ENCODE measurements at regions of chr2 and their contacts with region 1.

Region 1: GRCh38 chr2:66929632-66930338 is 467.3 kb upstream of the ETAA1 start:
- DNase-seq: peak; percentile 79
- H3K4me3 Mint-ChIP-seq: peak overlapping the region; percentile 55
- H3K27ac Mint-ChIP-seq: peak overlapping the region; percentile 68
- H3K4me1 Mint-ChIP-seq: peaks cover 22% of the 10 kb centered on the region
- H3K27me3 Mint-ChIP-seq: no peaks in the 10 kb centered on the region
- CTCF ChIP-seq: no peak

Region 2: GRCh38 chr2:66862886-66863650 is 66.7 kb before region 1 on chr2:
- CTCF ChIA-PET with region 1: no interaction called
- POLR2A ChIA-PET with region 1: interaction called, 15 read pairs
- intact Hi-C with region 1: no loop called
- DNase-seq: peak; percentile 45
- H3K4me3 Mint-ChIP-seq: peak overlapping the region; percentile 47
- H3K27ac Mint-ChIP-seq: peak overlapping the region; percentile 91
- H3K4me1 Mint-ChIP-seq: peaks cover 13% of the 10 kb centered on the region
- H3K27me3 Mint-ChIP-seq: no peaks in the 10 kb centered on the region
- CTCF ChIP-seq: no peak

Region 3: GRCh38 chr2:66888791-66889631 is 40.8 kb before region 1 on chr2:
- CTCF ChIA-PET with region 1: no interaction called
- POLR2A ChIA-PET with region 1: interaction called, 15 read pairs
- intact Hi-C with region 1: no loop called
- DNase-seq: peak; percentile 85
- H3K4me3 Mint-ChIP-seq: no peak overlapping the region
- H3K27ac Mint-ChIP-seq: peak overlapping the region; percentile 94
- H3K4me1 Mint-ChIP-seq: peaks cover 34% of the 10 kb centered on the region
- H3K27me3 Mint-ChIP-seq: no peaks in the 10 kb centered on the region
- CTCF ChIP-seq: no peak

Region 4: DNA sequence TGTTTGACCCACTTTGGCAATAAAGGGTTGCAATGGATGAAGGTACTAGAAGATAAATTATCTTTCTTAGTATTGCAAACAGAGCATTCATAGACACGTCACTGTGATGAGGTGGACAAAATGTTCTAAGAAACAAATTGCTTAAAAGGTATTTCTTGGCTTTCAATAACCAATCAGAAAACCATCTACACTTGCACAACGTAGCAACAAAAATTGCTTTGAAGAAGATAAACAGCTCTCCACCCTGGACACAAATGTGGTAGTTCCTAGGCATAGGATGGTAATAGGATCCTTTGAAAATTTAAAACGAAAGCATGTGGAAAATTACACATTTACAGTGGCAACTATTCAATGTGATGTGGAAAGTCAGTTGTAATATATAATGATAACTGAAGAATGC is 27.4 kb after region 1 on chr2:
- CTCF ChIA-PET with region 1: no interaction called
- POLR2A ChIA-PET with region 1: interaction called, 32 read pairs
- intact Hi-C with region 1: no loop called
- DNase-seq: peak; percentile 44
- H3K4me3 Mint-ChIP-seq: no peak overlapping the region
- H3K27ac Mint-ChIP-seq: peak overlapping the region; percentile 81
- H3K4me1 Mint-ChIP-seq: peaks cover 22% of the 10 kb centered on the region
- H3K27me3 Mint-ChIP-seq: no peaks in the 10 kb centered on the region
- CTCF ChIP-seq: no peak

Region 5: DNA sequence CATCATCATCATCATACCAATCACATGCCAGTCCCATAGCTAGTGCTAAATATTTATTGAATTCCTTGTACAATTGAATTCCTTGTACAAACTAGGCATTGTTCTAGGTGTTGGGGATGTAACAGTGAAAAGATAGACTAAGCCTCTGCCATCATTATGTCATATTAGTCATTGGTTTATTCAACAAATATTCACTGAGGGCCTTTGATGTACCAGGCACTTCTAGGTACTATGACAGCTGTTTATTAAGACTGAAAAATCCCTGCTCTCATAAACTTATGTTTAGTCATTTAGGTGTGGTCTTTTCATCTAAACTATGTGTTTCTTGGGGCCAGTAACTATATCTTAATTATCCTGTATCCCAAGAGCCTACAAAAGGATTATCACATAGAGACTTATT is 55.1 kb after region 1 on chr2:
- CTCF ChIA-PET with region 1: no interaction called
- POLR2A ChIA-PET with region 1: no interaction called
- intact Hi-C with region 1: loop called (anchors 2 kb)
- DNase-seq: no peak
- H3K4me3 Mint-ChIP-seq: no peak overlapping the region
- H3K27ac Mint-ChIP-seq: no peak overlapping the region
- H3K4me1 Mint-ChIP-seq: no peaks in the 10 kb centered on the region
- H3K27me3 Mint-ChIP-seq: no peaks in the 10 kb centered on the region
- CTCF ChIP-seq: no peak